H1 (cell line): ENCODE measurements at regions of chr14 and their contacts with region 1.

Region 1: GRCh38 chr14:68961781-68962584 is 17.1 kb downstream of the ACTN1 start:
- DNase-seq: peak in 1 of 2 experiments; percentile 77
- H3K4me3 ChIP-seq: no peak overlapping the region
- H3K27ac ChIP-seq: peak overlapping the region; percentile 43; the same call in 1 of the 2 replicates
- H3K4me1 ChIP-seq: peaks cover 0 to 20% (median 11%) of the 10 kb centered on the region in 4 experiments; a peak in 4 of 7 replicates
- H3K27me3 ChIP-seq: no peaks in the 10 kb centered on the region; a peak in 1 of 7 replicates
- CTCF ChIP-seq: no peak
- EP300 ChIP-seq: no peak
- POLR2A ChIP-seq: no peak
- RAD21 ChIP-seq: no peak

Region 2: GRCh38 chr14:68979021-68979782 is 17.2 kb after region 1 on chr14 and contains the start of gene ACTN1:
- CTCF ChIA-PET with region 1: interaction called, 5 read pairs
- POLR2A ChIA-PET with region 1: interaction called, 29 read pairs
- DNase-seq: peak; percentile 87 to 89
- H3K4me3 ChIP-seq: peak within 1 kb of the TSS; percentile 78 to 99 (median 91)
- H3K27ac ChIP-seq: peak within 1 kb of the TSS; percentile 88
- H3K4me1 ChIP-seq: peaks cover 4 to 20% (median 11%) of the 10 kb centered on the region in 4 experiments
- H3K27me3 ChIP-seq: no peaks in the 10 kb centered on the region; a peak in 1 of 7 replicates
- CTCF ChIP-seq: no peak
- EP300 ChIP-seq: 0 out of 3 replicates have a peak, but pooled peaks of 1 of the 2 experiments have one; percentile 29
- POLR2A ChIP-seq: peak; percentile 82 to 85
- RAD21 ChIP-seq: no peak
- total RNA-seq, gene ACTN1: 253 and 262 TPM in 2 replicates